ENCODE measurements at regions of chr10 and their contacts with region 1.

Region 1: GRCh38 chr10:88932539-88933256 is 19.9 kb downstream of the ACTA2 start:
- DNase-seq: peak; percentile 44
- H3K4me3 Mint-ChIP-seq: no peak overlapping the region
- H3K27ac Mint-ChIP-seq: no peak overlapping the region
- H3K4me1 Mint-ChIP-seq: peaks cover 20% of the 10 kb centered on the region
- H3K27me3 Mint-ChIP-seq: no peaks in the 10 kb centered on the region

Region 2: GRCh38 chr10:88651101-88651551 is 281.6 kb before region 1 on chr10:
- CTCF ChIA-PET with region 1: no interaction called
- POLR2A ChIA-PET with region 1: no interaction called
- intact Hi-C with region 1: no loop called
- DNase-seq: no peak
- H3K4me3 Mint-ChIP-seq: no peak overlapping the region
- H3K27ac Mint-ChIP-seq: no peak overlapping the region
- H3K4me1 Mint-ChIP-seq: no peaks in the 10 kb centered on the region
- H3K27me3 Mint-ChIP-seq: peaks cover 7% of the 10 kb centered on the region

Region 3: GRCh38 chr10:88828310-88828709 is 104.4 kb before region 1 on chr10:
- CTCF ChIA-PET with region 1: interaction called, 376 read pairs
- POLR2A ChIA-PET with region 1: no interaction called
- intact Hi-C with region 1: no loop called
- DNase-seq: no peak
- H3K4me3 Mint-ChIP-seq: no peak overlapping the region
- H3K27ac Mint-ChIP-seq: no peak overlapping the region
- H3K4me1 Mint-ChIP-seq: peaks cover 60% of the 10 kb centered on the region
- H3K27me3 Mint-ChIP-seq: no peaks in the 10 kb centered on the region

Region 4: DNA sequence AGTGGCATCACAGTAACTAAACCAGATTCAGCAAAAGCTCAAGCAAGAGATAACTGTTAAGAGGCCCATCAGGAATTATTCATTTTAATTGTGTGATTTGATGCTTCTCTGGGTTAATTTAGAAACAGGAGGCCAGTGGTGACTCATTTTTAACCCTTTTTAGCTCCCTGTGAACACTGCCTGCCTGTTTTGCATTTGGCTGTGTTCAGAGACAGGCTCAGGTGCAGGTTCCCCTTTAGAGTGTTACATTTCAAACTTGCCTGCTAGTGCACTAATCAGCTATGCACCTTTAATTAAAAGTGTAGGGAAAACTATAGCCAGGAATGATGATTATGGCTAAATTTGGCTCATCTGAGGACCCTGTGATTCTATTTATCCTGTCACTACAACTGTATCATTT is 46.1 kb before region 1 on chr10:
- CTCF ChIA-PET with region 1: interaction called, 34 read pairs
- POLR2A ChIA-PET with region 1: no interaction called
- intact Hi-C with region 1: loop called (anchors 2 kb)
- DNase-seq: peak; percentile 45
- H3K4me3 Mint-ChIP-seq: no peak overlapping the region
- H3K27ac Mint-ChIP-seq: no peak overlapping the region
- H3K4me1 Mint-ChIP-seq: peaks cover 83% of the 10 kb centered on the region
- H3K27me3 Mint-ChIP-seq: no peaks in the 10 kb centered on the region

Region 5: GRCh38 chr10:88960802-88961201 is 28.1 kb after region 1 on chr10:
- CTCF ChIA-PET with region 1: interaction called, 7 read pairs
- POLR2A ChIA-PET with region 1: no interaction called
- intact Hi-C with region 1: loop called (anchors 2 kb)
- DNase-seq: peak; percentile 46
- H3K4me3 Mint-ChIP-seq: no peak overlapping the region
- H3K27ac Mint-ChIP-seq: peak overlapping the region; percentile 73
- H3K4me1 Mint-ChIP-seq: peaks cover 29% of the 10 kb centered on the region
- H3K27me3 Mint-ChIP-seq: no peaks in the 10 kb centered on the region

Region 6: GRCh38 chr10:89022734-89023133 is 90.0 kb after region 1 on chr10:
- CTCF ChIA-PET with region 1: interaction called, 10 read pairs
- POLR2A ChIA-PET with region 1: no interaction called
- intact Hi-C with region 1: no loop called
- DNase-seq: no peak
- H3K4me3 Mint-ChIP-seq: no peak overlapping the region
- H3K27ac Mint-ChIP-seq: no peak overlapping the region
- H3K4me1 Mint-ChIP-seq: peaks cover 6% of the 10 kb centered on the region
- H3K27me3 Mint-ChIP-seq: no peaks in the 10 kb centered on the region

Region 7: GRCh38 chr10:89163265-89163995 is 230.7 kb after region 1 on chr10:
- CTCF ChIA-PET with region 1: interaction called, 3 read pairs
- POLR2A ChIA-PET with region 1: no interaction called
- intact Hi-C with region 1: loop called (anchors 2 kb)
- DNase-seq: peak; percentile 76
- H3K4me3 Mint-ChIP-seq: peak overlapping the region; percentile 10
- H3K27ac Mint-ChIP-seq: peak overlapping the region; percentile 35
- H3K4me1 Mint-ChIP-seq: peaks cover 42% of the 10 kb centered on the region
- H3K27me3 Mint-ChIP-seq: peaks cover 15% of the 10 kb centered on the region